ENCODE measurements at regions of chr11 and their contacts with region 1.

Region 1: DNA sequence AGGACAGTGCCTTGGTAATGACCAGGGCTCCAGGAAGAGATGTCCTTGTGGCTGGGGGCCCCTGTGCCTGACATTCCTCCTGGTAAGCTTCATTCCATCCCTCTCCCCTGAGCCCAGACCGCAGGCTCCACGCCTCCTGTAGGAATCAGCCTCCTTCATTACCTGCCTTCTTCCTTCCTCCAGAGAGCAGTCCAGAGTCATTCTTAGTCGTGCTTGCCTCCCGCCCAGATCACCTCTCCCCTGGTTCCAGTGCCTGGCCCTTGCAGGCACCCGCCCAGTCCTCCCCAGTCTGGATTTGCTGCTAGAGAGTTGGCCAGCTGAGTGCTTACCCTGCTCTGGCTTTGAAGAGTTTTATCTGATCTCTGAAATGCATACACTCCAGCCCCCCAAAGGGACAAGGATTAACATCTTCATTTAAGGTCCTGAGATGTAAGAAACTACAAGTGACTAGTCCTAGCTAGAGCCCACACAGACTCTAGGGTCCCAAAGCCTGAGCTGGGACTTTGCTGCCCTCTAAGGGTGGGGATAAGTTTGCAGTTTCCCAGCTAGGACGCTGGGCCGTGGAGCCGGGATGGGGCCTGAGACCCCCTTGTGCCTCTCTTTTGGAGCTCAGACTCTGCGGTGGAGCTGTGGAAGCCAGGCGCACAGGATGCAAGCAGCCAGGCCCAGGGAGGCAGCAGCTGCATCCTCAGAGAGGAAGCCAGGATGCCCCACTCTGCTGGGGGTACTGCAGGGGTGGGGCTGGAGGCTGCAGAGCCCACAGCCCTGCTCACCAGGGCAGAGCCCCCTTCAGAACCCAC is 1.6 kb downstream of the NR1H3 start:
- DNase-seq: peak; percentile 58 to 75
- ATAC-seq: peak; percentile 74 to 89
- H3K4me3 ChIP-seq: no peak overlapping the region
- H3K27ac ChIP-seq: peak overlapping the region; percentile 52 to 91
- H3K4me1 ChIP-seq: peaks cover 43% of the 10 kb centered on the region
- CTCF ChIP-seq: peak; percentile 80
- EP300 ChIP-seq: no peak
- POLR2A ChIP-seq: no peak
- RAD21 ChIP-seq: peak; percentile 81 to 88

Region 2: GRCh38 chr11:47176328-47177228 is 82.8 kb before region 1 on chr11 and contains the start of gene ARFGAP2:
- CTCF ChIA-PET with region 1: interaction called, 173 read pairs
- POLR2A ChIA-PET with region 1: interaction called, 3 read pairs
- DNase-seq: peak; percentile 95 to 99
- ATAC-seq: peak; percentile 86 to 96
- H3K4me3 ChIP-seq: peak within 1 kb of the TSS; percentile 100
- H3K27ac ChIP-seq: peak within 1 kb of the TSS; percentile 94 to 100
- H3K4me1 ChIP-seq: peaks cover 14% of the 10 kb centered on the region
- CTCF ChIP-seq: no peak
- EP300 ChIP-seq: no peak
- POLR2A ChIP-seq: peak; percentile 29; the same call in 1 of the 2 replicates
- RAD21 ChIP-seq: no peak
- polyA plus RNA-seq, gene ARFGAP2: 28.3 and 29.5 TPM in 2 replicates

Region 3: DNA sequence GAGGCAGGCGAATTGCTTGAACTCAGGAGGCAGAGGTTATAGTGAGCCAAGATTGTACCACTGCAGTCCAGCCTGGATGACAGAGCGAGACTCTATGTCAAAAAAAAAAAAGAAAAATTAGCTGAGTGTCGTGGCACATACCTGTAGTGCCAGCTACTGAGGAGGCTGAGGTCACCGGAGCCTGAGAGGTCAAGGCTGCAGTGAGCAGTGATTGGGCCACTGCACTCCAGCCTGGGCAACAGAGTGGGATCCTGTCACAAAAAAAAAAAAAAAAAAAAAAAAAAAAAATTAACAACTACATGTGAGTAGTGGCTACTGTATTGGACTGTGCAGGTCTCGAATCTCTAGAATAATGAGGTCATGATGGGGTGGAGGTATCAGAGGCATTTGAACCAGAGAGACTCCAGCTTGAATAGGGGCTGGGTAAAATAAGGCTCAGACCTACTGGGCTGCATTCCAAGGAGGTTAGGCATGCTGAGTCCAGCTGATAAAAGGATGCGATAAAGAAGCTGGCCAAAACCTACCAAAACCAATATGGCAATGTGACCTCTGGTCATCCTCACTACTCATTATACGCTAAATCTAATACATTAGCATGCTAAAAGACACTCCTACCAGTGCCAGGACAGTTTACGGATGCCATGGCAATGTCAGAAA is 67.4 kb before region 1 on chr11:
- CTCF ChIA-PET with region 1: interaction called, 36 read pairs
- POLR2A ChIA-PET with region 1: no interaction called
- DNase-seq: no peak
- ATAC-seq: no peak
- H3K4me3 ChIP-seq: no peak overlapping the region
- H3K27ac ChIP-seq: no peak overlapping the region
- H3K4me1 ChIP-seq: peaks cover 36% of the 10 kb centered on the region
- CTCF ChIP-seq: no peak
- EP300 ChIP-seq: no peak
- POLR2A ChIP-seq: no peak
- RAD21 ChIP-seq: no peak

Region 4: DNA sequence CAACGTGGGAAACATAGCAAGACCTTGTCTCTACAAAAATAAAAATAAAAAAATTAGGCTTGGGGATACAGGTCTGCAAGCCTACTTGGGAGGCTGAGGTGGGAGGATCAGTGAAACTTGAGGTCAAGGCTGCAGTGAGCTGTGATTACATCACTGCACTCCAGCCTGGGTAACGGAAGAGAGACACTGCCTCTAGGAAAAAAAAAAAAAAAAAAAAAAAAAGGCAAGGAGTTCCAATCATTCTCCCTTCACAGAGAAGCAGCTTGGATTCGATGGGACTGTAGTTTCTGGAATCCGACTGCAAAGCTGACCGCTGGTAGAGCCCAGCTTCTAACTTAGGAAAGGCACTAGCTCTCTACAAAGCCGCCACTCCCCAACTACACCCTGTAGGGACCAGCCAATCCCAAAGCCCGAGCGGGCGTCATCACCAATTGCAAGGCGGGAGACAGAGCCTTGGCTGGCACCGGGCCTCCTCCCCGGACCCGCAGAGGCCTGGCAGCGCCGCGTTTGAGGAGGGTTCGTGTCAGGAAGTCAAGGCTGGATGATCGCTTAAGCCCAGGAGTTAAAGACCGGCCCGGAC is 45.3 kb before region 1 on chr11:
- CTCF ChIA-PET with region 1: interaction called, 28 read pairs
- POLR2A ChIA-PET with region 1: interaction called, 10 read pairs
- DNase-seq: peak; percentile 95 to 96
- ATAC-seq: peak; percentile 95 to 96
- H3K4me3 ChIP-seq: peak overlapping the region; percentile 77
- H3K27ac ChIP-seq: peak overlapping the region; percentile 96 to 99
- H3K4me1 ChIP-seq: peaks cover 30% of the 10 kb centered on the region
- CTCF ChIP-seq: no peak
- EP300 ChIP-seq: no peak
- POLR2A ChIP-seq: peak; percentile 79
- RAD21 ChIP-seq: no peak

Region 5: DNA sequence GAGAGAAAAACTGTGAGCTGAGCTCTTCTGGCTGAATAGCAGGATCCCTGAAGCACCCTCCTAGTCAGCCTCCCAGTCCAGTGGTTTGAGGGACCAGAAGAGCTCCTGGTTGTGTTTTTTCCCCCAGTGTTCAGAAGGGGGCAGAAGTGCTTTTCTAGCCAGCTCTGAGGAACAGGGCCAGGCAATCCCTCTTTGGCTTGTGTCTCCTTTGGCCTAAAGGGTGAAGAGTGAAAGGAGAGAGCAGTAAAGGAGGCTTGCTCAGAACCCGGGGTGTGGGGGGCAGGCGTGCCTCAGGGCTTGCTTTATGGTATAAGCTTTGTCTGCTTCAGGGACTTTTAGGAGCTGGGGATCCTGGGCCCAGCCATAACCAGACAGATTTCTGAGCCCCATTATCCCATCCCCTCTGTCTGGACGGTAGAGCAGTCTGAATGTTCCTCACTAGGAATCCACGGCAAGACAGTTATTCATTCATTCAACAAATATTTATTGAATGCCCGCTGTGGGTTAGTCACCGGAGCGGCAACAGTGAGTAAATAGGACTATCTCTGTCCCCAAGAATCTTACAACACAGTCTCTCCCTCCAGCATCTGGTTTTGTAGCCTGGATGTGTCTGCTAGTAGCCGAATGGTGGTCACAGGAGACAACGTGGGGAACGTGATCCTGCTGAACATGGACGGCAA is 25.2 kb before region 1 on chr11:
- CTCF ChIA-PET with region 1: interaction called, 97 read pairs
- POLR2A ChIA-PET with region 1: interaction called, 11 read pairs
- DNase-seq: peak; percentile 67 to 90
- ATAC-seq: peak; percentile 88 to 90
- H3K4me3 ChIP-seq: peak overlapping the region; percentile 21
- H3K27ac ChIP-seq: peak overlapping the region; percentile 79 to 89
- H3K4me1 ChIP-seq: peaks cover 46% of the 10 kb centered on the region
- CTCF ChIP-seq: peak; percentile 67
- EP300 ChIP-seq: peak; percentile 25 to 58; a peak in 2 of 5 replicates
- POLR2A ChIP-seq: no peak
- RAD21 ChIP-seq: peak; percentile 75 to 78

Region 6: GRCh38 chr11:47248664-47249377 is 10.6 kb before region 1 on chr11 and contains the start of gene ACP2:
- CTCF ChIA-PET with region 1: interaction called, 141 read pairs
- POLR2A ChIA-PET with region 1: interaction called, 18 read pairs
- DNase-seq: peak; percentile 81 to 94
- ATAC-seq: peak; percentile 93 to 96
- H3K4me3 ChIP-seq: peak within 1 kb of the TSS; percentile 74
- H3K27ac ChIP-seq: peak within 1 kb of the TSS; percentile 95
- H3K4me1 ChIP-seq: peaks cover 19% of the 10 kb centered on the region; the same call in 2 of the 3 replicates
- CTCF ChIP-seq: peak; percentile 35
- EP300 ChIP-seq: no peak
- POLR2A ChIP-seq: peak; percentile 83; the same call in 1 of the 2 replicates
- RAD21 ChIP-seq: peak; percentile 31 to 39; a peak in 4 of 5 replicates
- polyA plus RNA-seq, gene ACP2: 13.6 and 17.7 TPM in 2 replicates

Region 7: GRCh38 chr11:47355283-47356128 is 96.1 kb after region 1 on chr11:
- CTCF ChIA-PET with region 1: interaction called, 44 read pairs
- POLR2A ChIA-PET with region 1: interaction called, 3 read pairs
- DNase-seq: peak; percentile 89 to 98
- ATAC-seq: peak; percentile 92 to 97
- H3K4me3 ChIP-seq: peak overlapping the region; percentile 43
- H3K27ac ChIP-seq: peak overlapping the region; percentile 90 to 97
- H3K4me1 ChIP-seq: peaks cover 4% of the 10 kb centered on the region; the same call in 1 of the 3 replicates
- CTCF ChIP-seq: peak; percentile 100
- EP300 ChIP-seq: no peak
- POLR2A ChIP-seq: no peak
- RAD21 ChIP-seq: peak; percentile 99 to 100

Region 8: DNA sequence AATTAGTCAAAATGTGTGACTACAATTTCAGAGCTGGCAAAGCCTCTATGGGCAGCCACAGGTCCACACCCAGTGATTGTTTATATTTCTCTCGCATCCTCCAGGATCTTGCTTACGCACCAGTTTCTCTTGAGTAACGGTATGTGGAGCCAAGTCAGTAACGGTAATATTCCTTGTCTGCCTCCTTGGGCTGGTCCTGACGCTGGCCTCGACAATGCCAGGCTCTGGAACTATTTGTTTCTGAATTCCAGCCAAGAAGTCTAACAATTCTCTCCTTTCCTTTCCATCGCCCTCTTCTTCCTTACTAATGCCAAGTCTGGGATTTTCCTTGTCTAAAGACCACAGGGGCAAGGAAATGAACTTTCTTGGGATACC is 598.8 kb after region 1 on chr11:
- CTCF ChIA-PET with region 1: no interaction called
- POLR2A ChIA-PET with region 1: no interaction called
- DNase-seq: peak; percentile 72 to 97
- ATAC-seq: peak; percentile 94 to 97
- H3K4me3 ChIP-seq: no peak overlapping the region
- H3K27ac ChIP-seq: peak overlapping the region; percentile 88 to 89
- H3K4me1 ChIP-seq: peaks cover 73% of the 10 kb centered on the region
- CTCF ChIP-seq: no peak
- EP300 ChIP-seq: peak; percentile 71 to 94; a peak in 4 of 5 replicates
- POLR2A ChIP-seq: no peak
- RAD21 ChIP-seq: peak; percentile 35 to 38; a peak in 3 of 5 replicates